ENCODE measurements at regions of chr17 and their contacts with region 1.

Region 1: GRCh38 chr17:16991349-16992009 is 19.6 kb upstream of the TNFRSF13B start:
- DNase-seq: peak; percentile 83
- ATAC-seq: peak; percentile 84
- H3K4me3 Mint-ChIP-seq: no peak overlapping the region
- H3K27ac Mint-ChIP-seq: no peak overlapping the region
- H3K4me1 Mint-ChIP-seq: no peaks in the 10 kb centered on the region
- H3K27me3 Mint-ChIP-seq: no peaks in the 10 kb centered on the region
- CTCF ChIP-seq: peak; percentile 79

Region 2: GRCh38 chr17:16662936-16663335 is 328.5 kb before region 1 on chr17:
- CTCF ChIA-PET with region 1: no interaction called
- POLR2A ChIA-PET with region 1: no interaction called
- DNase-seq: no peak
- ATAC-seq: no peak
- H3K4me3 Mint-ChIP-seq: no peak overlapping the region
- H3K27ac Mint-ChIP-seq: no peak overlapping the region
- H3K4me1 Mint-ChIP-seq: peaks cover 15% of the 10 kb centered on the region
- H3K27me3 Mint-ChIP-seq: peaks cover 45% of the 10 kb centered on the region
- CTCF ChIP-seq: no peak

Region 3: DNA sequence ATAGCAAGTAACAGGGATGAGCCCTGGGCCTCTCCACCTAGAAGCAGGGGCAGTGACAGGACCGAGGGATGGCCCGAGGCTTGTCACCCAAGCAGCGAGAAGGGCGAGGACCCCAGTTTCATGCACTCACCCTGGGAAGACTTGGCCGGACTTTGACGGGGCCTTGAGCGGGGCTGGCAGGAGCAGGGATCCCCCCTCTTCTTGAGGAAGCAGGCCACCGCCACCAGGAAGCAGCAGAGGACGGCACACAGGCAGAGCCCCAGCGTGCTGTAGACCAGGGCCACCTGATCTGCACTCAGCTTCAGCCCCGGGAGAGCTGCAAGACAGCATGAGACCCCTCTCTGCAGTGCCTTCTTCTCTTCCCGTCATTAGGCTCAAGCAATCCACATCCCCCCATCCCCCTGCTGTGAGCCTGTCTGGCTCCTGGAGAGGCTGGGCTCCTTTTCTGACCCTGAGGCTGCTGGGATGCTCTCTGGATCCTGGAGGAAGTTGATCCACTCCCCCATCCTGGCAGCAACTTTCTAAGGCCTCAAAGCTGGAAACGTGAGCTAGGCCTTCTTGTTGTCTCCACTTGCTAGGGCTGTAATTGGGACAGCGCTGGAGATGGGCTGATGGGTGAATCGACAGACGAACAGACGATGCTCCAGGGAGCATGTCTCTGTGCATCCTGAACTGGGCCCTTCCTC is 51.1 kb before region 1 on chr17:
- CTCF ChIA-PET with region 1: interaction called, 17 read pairs
- POLR2A ChIA-PET with region 1: no interaction called
- DNase-seq: peak; percentile 59
- ATAC-seq: peak; percentile 87
- H3K4me3 Mint-ChIP-seq: no peak overlapping the region
- H3K27ac Mint-ChIP-seq: no peak overlapping the region
- H3K4me1 Mint-ChIP-seq: peaks cover 30% of the 10 kb centered on the region
- H3K27me3 Mint-ChIP-seq: no peaks in the 10 kb centered on the region
- CTCF ChIP-seq: no peak

Region 4: GRCh38 chr17:16952401-16952800 is 39.1 kb before region 1 on chr17:
- CTCF ChIA-PET with region 1: no interaction called
- POLR2A ChIA-PET with region 1: no interaction called
- DNase-seq: no peak
- ATAC-seq: no peak
- H3K4me3 Mint-ChIP-seq: no peak overlapping the region
- H3K27ac Mint-ChIP-seq: no peak overlapping the region
- H3K4me1 Mint-ChIP-seq: no peaks in the 10 kb centered on the region; the same call in none of the 2 replicates
- H3K27me3 Mint-ChIP-seq: peaks cover 3% of the 10 kb centered on the region
- CTCF ChIP-seq: no peak

Region 5: DNA sequence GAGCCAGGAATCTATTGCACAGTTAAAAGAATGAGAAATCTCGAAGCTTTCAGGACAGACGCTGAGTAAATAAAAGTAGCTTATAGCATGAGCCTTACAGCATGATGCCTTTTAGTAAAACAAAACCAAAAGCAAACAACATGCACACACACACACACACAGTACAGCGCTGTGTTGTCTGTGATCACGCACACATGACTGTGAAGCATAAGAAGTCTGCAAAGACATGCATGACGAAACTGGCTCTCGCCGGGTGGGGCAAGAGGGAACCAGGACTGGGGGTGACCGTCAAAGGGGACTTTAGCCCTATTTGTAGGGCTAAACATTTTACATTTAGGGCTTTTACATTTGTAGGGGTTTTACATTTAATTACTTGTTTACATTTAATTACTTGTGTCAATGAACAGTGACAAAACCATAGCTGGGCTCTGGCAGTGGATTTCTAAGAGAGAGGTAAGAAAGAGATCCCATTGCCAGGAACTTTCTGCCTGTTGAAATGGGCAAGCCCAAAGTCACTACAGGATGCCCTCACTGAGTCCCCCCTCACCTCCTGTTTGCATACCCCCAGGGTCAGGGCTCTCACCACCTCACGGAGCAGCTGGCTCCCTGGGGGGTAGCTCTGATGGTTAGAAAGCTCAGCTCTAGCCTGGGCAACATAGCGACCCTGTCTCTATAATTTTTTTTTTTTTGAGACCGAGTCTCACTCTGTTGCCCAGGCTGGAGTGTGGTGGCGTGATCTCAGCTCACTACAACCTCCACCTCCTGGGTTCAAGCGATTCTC is 17.5 kb before region 1 on chr17:
- CTCF ChIA-PET with region 1: interaction called, 14 read pairs
- POLR2A ChIA-PET with region 1: no interaction called
- DNase-seq: no peak
- ATAC-seq: no peak
- H3K4me3 Mint-ChIP-seq: no peak overlapping the region
- H3K27ac Mint-ChIP-seq: no peak overlapping the region
- H3K4me1 Mint-ChIP-seq: peaks cover 5% of the 10 kb centered on the region; the same call in 1 of the 2 replicates
- H3K27me3 Mint-ChIP-seq: no peaks in the 10 kb centered on the region; the same call in 1 of the 2 replicates
- CTCF ChIP-seq: no peak

Region 6: DNA sequence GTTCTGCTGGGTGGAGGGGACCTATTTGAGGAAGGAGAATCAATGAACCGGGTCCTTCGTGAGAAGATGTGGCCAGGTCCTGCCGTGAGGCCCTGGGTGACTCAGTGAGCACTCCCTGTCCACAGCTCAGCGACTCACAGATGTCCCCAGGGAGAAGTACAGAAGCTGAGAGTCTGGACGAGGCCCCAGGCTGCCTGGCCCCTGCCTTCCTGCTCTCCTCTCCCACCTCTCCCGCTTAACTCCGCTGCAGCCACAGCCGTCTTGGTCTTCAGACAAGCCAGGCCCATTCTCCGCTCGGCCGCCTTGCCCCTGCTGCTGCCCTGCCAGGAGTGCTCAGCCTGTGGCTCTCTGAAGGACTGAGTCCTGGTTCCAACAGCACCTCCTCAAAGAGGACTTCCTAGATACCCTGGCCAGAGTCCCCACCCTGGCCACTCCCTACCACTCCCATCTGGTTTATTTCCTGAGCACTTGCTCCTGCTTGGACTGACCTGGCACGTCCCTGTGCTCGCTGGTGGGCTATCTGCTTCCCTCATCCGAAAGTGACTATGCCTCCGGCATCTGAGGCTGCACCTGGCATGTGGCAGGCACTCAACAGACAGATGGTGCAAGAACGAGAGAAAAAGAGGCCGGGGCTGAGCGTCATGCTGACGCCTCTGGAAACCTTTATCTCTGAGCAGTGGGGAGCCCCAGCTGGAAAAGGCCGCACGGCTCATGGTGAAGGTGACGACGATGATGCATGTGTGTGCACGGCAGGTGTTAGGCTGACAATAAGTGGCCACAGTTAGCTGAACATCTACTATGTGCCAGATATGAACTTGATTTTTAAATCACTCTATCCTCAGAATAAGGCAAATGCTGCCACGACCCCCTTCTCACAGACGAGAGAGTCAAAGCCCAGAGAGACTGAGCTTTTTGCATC is 10.4 kb before region 1 on chr17:
- CTCF ChIA-PET with region 1: interaction called, 14 read pairs
- POLR2A ChIA-PET with region 1: no interaction called
- DNase-seq: no peak
- ATAC-seq: no peak
- H3K4me3 Mint-ChIP-seq: no peak overlapping the region
- H3K27ac Mint-ChIP-seq: 0 out of 2 replicates have a peak overlapping the region, but pooled peaks have one; percentile 75
- H3K4me1 Mint-ChIP-seq: no peaks in the 10 kb centered on the region; the same call in 1 of the 2 replicates
- H3K27me3 Mint-ChIP-seq: no peaks in the 10 kb centered on the region; the same call in 1 of the 2 replicates
- CTCF ChIP-seq: no peak

Region 7: DNA sequence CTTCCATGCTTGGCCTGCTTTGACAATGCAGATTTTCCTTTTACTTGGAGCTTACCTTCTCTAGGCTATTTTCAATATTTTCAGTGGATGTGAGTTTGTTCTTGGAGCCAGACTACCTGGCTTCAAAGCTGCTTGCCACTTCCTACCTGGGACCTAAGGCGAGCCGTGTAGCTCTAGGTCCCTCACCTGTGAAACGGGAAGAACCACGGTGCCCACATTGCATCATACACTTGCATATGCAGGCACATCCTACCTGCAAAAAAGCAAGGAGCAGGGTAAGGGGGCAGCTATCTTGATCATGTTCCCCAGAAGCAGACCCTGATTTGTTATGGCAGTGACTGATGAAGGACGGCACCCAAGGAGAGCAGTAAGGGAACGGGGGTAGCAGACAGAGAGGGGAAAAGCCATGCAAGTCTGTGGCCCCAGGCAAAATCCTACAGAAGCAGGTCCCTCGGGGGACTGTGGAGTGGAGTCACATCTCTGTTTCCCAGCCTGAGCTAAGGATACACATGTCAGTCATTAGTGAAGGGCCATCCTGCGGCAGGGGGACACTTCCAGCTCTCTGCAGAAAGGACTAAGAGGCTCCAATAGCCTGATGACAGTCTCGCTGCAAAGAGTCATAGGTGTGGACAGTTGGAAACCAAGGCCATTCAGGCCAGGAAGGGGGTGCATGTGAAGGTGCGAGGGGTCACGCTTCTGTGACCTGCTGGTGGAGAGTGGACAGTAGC is 23.9 kb after region 1 on chr17:
- CTCF ChIA-PET with region 1: no interaction called
- POLR2A ChIA-PET with region 1: no interaction called
- DNase-seq: no peak
- ATAC-seq: no peak
- H3K4me3 Mint-ChIP-seq: no peak overlapping the region
- H3K27ac Mint-ChIP-seq: no peak overlapping the region
- H3K4me1 Mint-ChIP-seq: peaks cover 8% of the 10 kb centered on the region
- H3K27me3 Mint-ChIP-seq: peaks cover 2% of the 10 kb centered on the region; the same call in 1 of the 2 replicates
- CTCF ChIP-seq: no peak

Region 8: DNA sequence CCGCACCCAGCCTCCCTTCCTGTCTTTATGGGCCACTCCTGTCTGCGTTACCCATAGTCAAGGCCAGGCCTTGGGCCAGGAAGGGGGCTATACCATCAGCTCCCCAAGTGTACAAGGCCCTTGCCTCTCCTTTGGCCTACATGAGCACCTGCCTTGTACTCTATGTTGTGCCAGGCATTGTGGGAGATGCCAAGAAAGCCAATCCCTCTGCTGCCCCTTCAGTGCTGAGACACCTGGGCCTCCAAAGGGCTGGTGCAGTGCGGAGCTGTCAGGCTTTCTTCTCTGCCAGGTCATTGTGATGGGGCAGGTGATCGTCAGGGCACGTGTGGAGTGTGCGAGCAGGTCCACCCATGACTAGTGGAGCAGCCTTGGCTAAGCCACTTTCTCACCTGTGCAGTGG is 110.7 kb after region 1 on chr17:
- CTCF ChIA-PET with region 1: no interaction called
- POLR2A ChIA-PET with region 1: no interaction called
- DNase-seq: no peak
- ATAC-seq: no peak
- H3K4me3 Mint-ChIP-seq: no peak overlapping the region
- H3K27ac Mint-ChIP-seq: no peak overlapping the region; the same call in 1 of the 2 replicates
- H3K4me1 Mint-ChIP-seq: peaks cover 10% of the 10 kb centered on the region
- H3K27me3 Mint-ChIP-seq: no peaks in the 10 kb centered on the region
- CTCF ChIP-seq: no peak